ENCODE measurements at regions of chr5 and their contacts with region 1.

Region 1: DNA sequence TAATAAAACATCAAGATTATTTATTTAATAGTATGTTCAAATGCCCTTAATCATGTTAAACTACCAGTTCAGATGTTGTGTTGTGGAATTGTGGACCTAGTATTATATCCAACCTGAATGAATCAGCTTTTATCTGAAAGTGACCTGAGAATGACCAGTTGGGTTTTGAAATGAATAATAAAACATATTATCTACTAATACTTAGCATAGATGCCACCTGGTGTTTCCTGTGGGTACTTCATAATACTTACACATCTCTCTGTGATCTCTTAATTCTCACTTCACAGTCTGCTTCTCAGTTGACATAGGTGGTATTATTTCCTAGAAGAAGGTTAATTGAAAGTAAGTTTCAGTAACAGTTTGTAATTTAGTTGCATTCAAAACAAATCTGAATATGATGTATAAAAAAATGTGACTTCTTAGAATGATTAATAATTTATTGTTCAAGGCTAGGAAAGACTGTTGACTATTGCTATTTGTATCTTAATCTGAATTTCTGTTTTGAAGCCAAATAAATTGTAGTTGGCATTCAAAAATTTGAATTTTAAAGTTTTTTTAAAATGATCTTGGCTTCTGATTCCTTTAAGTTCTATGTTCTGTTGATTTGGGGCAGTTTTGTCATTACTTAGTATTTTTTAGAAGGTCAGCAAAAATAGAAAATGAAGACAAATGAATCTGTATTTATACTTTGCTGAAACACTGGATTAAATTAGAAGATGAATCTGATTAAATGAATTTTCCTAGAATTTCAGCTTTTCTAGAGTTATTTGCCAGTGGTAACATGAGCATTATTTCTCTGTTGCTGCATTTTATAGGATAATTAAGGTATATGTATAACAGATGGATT is 48.2 kb downstream of the KIF2A start:
- DNase-seq: no peak
- ATAC-seq: peak; percentile 77 to 96 (median 93)
- H3K4me3 ChIP-seq: no peak overlapping the region
- H3K27ac ChIP-seq: no peak overlapping the region
- H3K4me1 ChIP-seq: no peaks in the 10 kb centered on the region
- H3K27me3 ChIP-seq: no peaks in the 10 kb centered on the region
- CTCF ChIP-seq: peak; percentile 22 to 53 (median 36)

Region 2: GRCh38 chr5:62214701-62215100 is 139.6 kb before region 1 on chr5:
- intact Hi-C with region 1: loop called in 1 of 3 experiments (anchors 10 kb)
- DNase-seq: no peak
- ATAC-seq: no peak
- H3K4me3 ChIP-seq: no peak overlapping the region
- H3K27ac ChIP-seq: no peak overlapping the region
- H3K4me1 ChIP-seq: no peaks in the 10 kb centered on the region
- H3K27me3 ChIP-seq: peaks cover 0 to 6% (median 0%) of the 10 kb centered on the region in 4 donors
- CTCF ChIP-seq: no peak